ENCODE measurements at regions of chr13 and their contacts with region 1.

Region 1: DNA sequence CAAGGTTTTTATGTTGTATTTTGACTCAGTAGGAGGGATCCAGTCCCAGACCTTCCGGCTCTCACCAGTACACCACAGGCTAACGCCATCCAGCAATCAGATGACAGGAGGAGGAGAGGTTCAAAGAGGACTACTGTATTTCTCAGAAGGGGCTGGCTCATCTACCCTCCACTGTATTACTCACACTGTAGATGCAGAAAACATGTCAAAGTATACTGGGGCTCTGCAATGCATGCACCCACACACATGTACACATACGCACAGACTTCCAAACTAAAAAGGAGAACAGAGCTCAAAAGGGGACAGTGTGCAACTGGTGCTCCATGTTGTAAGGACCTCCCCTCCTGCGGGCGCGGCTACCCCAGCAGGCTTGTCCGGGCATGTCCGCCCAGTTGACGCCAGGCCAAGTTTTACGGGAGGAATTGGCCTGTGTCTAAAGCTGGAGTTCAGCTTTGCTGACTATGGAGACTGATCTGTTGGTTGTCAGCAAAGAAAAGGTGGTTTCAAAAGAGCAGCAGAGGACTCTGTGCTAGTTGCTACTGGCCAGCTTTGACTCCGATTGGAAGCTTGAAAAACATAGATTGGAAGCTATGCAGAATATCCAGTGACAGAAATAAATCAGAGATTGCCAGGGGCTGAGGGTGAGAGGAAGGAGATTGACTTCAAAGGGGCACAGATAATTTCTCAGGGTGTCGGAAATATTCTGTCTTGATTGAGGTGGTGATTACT is 314.2 kb downstream of the DLEU7 start:
- DNase-seq: peak; percentile 88 to 91
- ATAC-seq: peak; percentile 89 to 96 (median 94)
- H3K4me3 ChIP-seq: peak overlapping the region in 8 of 10 donors; percentile 5 to 34 (median 26)
- H3K27ac ChIP-seq: peak overlapping the region; percentile 26 to 93 (median 78)
- H3K4me1 ChIP-seq: peaks cover 0 to 51% (median 37%) of the 10 kb centered on the region in 9 donors
- H3K27me3 ChIP-seq: no peaks in the 10 kb centered on the region
- CTCF ChIP-seq: peak in 1 of 9 donors; percentile 11

Region 2: GRCh38 chr13:49996951-49997895 is 532.1 kb before region 1 on chr13 and contains the start of gene TRIM13:
- intact Hi-C with region 1: loop called in 5 of 10 experiments (anchors 5 to 10 kb)
- DNase-seq: peak; percentile 91
- ATAC-seq: peak; percentile 87 to 95 (median 93)
- H3K4me3 ChIP-seq: peak within 1 kb of the TSS; percentile 61 to 99 (median 91)
- H3K27ac ChIP-seq: peak within 1 kb of the TSS; percentile 93 to 100 (median 99)
- H3K4me1 ChIP-seq: peaks cover 11 to 58% (median 48%) of the 10 kb centered on the region in 9 donors
- H3K27me3 ChIP-seq: no peaks in the 10 kb centered on the region
- CTCF ChIP-seq: peak; percentile 35 to 94 (median 80)
- total RNA-seq, gene TRIM13: 16.0 to 26.9 (median 19.1) TPM

Region 3: GRCh38 chr13:50170447-50171037 is 358.8 kb before region 1 on chr13:
- intact Hi-C with region 1: loop called in 2 of 10 experiments (anchors 5 to 10 kb)
- DNase-seq: no peak
- ATAC-seq: no peak
- H3K4me3 ChIP-seq: no peak overlapping the region
- H3K27ac ChIP-seq: no peak overlapping the region
- H3K4me1 ChIP-seq: no peaks in the 10 kb centered on the region
- H3K27me3 ChIP-seq: no peaks in the 10 kb centered on the region
- CTCF ChIP-seq: peak in 7 of 9 donors; percentile 27 to 58 (median 54)

Region 4: DNA sequence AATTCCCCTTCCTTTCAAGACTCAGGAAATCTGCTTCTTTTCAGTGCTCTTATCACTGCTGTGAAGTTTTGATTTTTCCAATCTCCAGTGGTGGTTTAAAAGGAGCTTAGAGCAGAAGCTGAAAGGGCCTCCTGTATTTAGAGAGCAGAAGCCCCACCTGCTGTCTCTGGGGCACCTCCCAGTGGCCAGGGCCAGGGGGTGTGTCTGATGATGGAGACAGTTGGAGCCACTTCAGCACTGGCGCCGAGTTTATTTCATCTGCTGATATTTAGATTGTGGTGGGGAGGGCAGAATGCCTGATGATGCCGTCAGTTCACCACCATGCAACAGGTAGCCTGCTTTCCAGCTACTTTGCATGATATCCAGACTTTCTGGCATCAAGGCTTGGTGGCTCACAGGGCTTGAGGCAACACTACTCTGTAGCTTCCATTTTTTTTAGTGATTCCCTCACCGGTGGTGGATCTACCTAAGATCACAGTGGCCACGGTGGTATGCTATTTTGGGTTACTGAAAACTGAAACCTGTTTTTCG is 142.2 kb before region 1 on chr13:
- intact Hi-C with region 1: loop called in 4 of 10 experiments (anchors 5 to 10 kb)
- DNase-seq: peak; percentile 52 to 65
- ATAC-seq: peak; percentile 86 to 96 (median 94)
- H3K4me3 ChIP-seq: peak overlapping the region in 9 of 10 donors; percentile 4 to 43 (median 35)
- H3K27ac ChIP-seq: peak overlapping the region; percentile 5 to 83 (median 78)
- H3K4me1 ChIP-seq: peaks cover 0 to 34% (median 19%) of the 10 kb centered on the region in 9 donors
- H3K27me3 ChIP-seq: no peaks in the 10 kb centered on the region
- CTCF ChIP-seq: peak in 6 of 9 donors; percentile 27 to 54 (median 38)

Region 5: GRCh38 chr13:50685491-50685890 is 156.2 kb after region 1 on chr13:
- intact Hi-C with region 1: loop called in 1 of 10 experiments (anchors 10 kb)
- DNase-seq: peak; percentile 81 to 90
- ATAC-seq: peak; percentile 72 to 92 (median 80)
- H3K4me3 ChIP-seq: no peak overlapping the region
- H3K27ac ChIP-seq: peak overlapping the region; percentile 2 to 89 (median 74)
- H3K4me1 ChIP-seq: peaks cover 0 to 49% (median 33%) of the 10 kb centered on the region in 9 donors
- H3K27me3 ChIP-seq: no peaks in the 10 kb centered on the region
- CTCF ChIP-seq: no peak

Measured in heart right ventricle (tissue), 16 donors.